OCI-LY7 (cell line): ENCODE measurements at regions of chr1 and their contacts with region 1.

Region 1: DNA sequence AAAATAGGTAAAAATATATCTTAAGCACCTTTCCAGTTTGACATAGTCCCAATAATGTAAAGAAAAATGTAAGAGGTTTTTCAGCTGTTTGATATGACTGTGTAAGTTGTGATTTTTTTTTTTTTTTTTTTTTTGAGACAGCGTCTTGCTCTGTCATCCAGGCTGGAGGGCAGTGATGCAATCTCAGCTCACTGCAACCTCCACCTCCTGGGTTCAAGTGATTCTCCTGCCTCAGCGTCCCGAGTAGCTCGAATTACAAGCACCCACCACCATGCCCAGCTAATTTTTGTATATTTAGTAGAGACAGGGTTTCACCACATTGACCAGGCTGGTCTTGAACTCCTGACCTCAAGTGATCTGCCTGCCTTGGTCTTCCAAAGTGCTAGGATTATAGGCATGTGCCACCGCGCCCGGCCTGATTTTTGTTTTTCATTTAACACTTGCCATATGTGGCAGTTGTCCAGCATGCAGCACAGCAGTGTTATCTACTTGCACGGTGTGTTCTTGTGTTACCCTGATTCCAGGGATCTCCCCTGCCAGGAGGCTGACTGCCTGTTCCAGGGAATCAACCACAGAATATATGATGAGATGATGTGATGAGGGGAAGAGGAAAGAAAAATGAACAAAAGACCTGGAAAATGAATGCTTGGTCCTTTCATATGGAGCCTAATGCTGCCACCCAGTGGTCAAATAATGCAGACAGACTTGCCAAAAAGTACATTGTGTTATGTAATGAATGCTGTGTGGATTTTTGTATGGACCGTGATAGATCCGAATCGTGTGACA is 79.0 kb downstream of the RAVER2 start:
- DNase-seq: peak; percentile 68
- H3K4me3 ChIP-seq: no peak overlapping the region
- H3K27ac ChIP-seq: no peak overlapping the region
- H3K4me1 ChIP-seq: peaks cover 3% of the 10 kb centered on the region
- CTCF ChIP-seq: peak; percentile 93

Region 2: DNA sequence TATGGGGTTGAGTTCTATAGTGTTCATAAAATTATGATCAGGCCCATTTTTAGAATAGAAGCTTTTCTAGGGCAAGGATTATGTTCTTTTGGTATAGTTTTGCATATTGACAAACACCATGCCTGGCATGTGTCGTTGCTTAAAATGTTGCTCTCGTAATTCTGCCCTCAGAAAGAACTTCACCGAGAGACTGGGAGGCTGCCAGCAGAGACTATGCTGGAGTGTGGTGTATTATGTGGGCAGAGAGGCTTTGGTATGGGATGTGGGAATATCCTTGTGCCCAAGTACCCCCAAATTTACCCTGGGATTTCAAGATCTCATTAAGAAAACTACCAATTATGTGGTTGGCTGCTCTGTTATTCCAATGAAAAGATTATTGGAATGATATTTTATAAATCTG is 1202.8 kb before region 1 on chr1:
- CTCF ChIA-PET with region 1: interaction called, 17 read pairs
- POLR2A ChIA-PET with region 1: no interaction called
- intact Hi-C with region 1: no loop called
- DNase-seq: no peak
- H3K4me3 ChIP-seq: no peak overlapping the region
- H3K27ac ChIP-seq: no peak overlapping the region
- H3K4me1 ChIP-seq: no peaks in the 10 kb centered on the region
- CTCF ChIP-seq: no peak

Region 3: GRCh38 chr1:64579767-64580166 is 244.1 kb before region 1 on chr1:
- CTCF ChIA-PET with region 1: no interaction called
- POLR2A ChIA-PET with region 1: no interaction called
- intact Hi-C with region 1: no loop called
- DNase-seq: no peak
- H3K4me3 ChIP-seq: no peak overlapping the region
- H3K27ac ChIP-seq: no peak overlapping the region
- H3K4me1 ChIP-seq: no peaks in the 10 kb centered on the region
- CTCF ChIP-seq: no peak

Region 4: GRCh38 chr1:64686828-64687724 is 136.8 kb before region 1 on chr1:
- CTCF ChIA-PET with region 1: no interaction called
- POLR2A ChIA-PET with region 1: no interaction called
- intact Hi-C with region 1: loop called (anchors 1 kb)
- DNase-seq: peak; percentile 45
- H3K4me3 ChIP-seq: no peak overlapping the region
- H3K27ac ChIP-seq: no peak overlapping the region
- H3K4me1 ChIP-seq: no peaks in the 10 kb centered on the region
- CTCF ChIP-seq: peak; percentile 89

Region 5: DNA sequence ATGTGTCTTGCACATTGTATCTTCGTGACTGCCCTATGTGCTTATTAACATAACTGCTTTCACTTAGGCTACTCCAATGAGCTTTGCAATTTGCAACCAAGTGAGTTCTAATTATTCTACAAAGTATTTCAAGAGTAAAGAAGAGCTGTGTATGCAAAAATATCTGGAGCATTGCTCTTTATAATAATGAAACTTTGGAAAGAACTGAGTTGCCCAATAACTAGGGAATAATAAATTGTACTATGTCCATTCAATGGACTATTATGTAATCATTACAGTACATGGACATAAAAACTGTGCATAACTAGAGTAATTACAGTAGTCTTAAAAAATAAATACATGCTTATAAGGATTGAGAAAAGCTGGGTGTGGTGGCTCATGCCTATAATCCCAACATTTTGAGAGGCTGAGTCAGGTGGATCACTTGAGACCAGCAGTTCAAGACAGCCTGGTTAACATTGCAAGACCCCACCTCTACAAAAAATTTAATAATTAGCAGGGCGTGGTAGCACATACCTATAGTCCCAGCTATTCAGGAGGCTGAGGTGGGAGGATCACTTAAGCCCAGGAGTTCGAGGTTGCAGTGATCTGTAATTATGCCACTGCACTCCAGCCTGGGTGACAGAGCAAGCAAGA is 212.8 kb after region 1 on chr1:
- CTCF ChIA-PET with region 1: no interaction called
- POLR2A ChIA-PET with region 1: interaction called, 3 read pairs
- intact Hi-C with region 1: loop called (anchors 2 kb)
- DNase-seq: no peak
- H3K4me3 ChIP-seq: no peak overlapping the region
- H3K27ac ChIP-seq: no peak overlapping the region
- H3K4me1 ChIP-seq: peaks cover 6% of the 10 kb centered on the region
- CTCF ChIP-seq: no peak